AG04449 (cell line): ENCODE measurements at regions of chr2 and their contacts with region 1.

Region 1: GRCh38 chr2:113965644-113966043 is 75.8 kb downstream of the ACTR3 start:
- DNase-seq: no peak
- H3K4me3 ChIP-seq: no peak overlapping the region
- CTCF ChIP-seq: no peak

Region 2: DNA sequence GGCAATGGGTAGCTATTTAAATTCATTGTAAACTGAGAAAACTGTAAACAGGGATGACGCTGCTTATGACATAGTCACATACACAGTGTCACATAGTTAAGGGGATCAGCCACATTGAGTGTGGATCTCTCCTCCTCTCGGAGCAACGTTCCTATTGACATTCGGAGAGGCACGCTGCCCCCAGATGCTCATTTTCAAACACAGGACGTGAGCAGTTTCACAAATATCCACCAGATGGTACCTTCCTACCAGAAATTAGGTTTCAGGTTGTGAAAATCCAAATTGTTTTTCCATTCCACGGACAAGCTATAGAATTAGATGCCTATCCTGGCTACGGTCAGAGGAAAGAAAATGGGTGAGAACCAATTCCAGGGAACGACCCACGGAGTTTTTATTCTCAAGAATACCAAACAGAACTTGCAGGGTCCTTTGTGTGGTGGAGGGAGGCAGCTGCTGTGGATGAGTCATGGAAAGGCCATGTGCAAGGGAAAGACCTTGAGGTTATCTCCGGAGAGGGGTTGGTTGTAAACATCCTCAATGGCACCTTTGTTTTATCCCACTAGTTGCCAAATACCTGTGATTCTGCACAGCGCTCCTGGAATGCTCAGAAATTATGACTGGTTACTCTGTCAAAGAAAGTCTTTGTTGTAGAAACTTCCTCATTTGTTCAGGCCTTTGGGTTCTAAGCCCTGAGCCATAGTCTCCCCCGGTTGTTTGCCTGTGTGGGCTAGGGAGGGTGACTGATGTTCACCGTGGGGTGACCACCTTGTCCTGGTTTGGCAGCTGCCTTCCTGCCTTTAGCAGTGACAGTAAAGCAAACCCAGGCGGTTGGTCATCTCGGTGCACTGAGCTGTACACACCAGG is 12.2 kb after region 1 on chr2:
- CTCF ChIA-PET with region 1: interaction called, 22 read pairs
- POLR2A ChIA-PET with region 1: no interaction called
- DNase-seq: no peak
- H3K4me3 ChIP-seq: no peak overlapping the region
- CTCF ChIP-seq: peak; percentile 5